ENCODE measurements at regions of chr7 and their contacts with region 1.

Region 1: GRCh38 chr7:32846701-32847100 is 44.9 kb downstream of the KBTBD2 start:
- H3K4me3 ChIP-seq: no peak overlapping the region
- H3K27ac ChIP-seq: no peak overlapping the region
- H3K4me1 ChIP-seq: no peaks in the 10 kb centered on the region
- CTCF ChIP-seq: no peak

Region 2: GRCh38 chr7:32858648-32859047 is 11.9 kb after region 1 on chr7:
- CTCF ChIA-PET with region 1: interaction called, 19 read pairs
- POLR2A ChIA-PET with region 1: no interaction called
- H3K4me3 ChIP-seq: no peak overlapping the region
- H3K27ac ChIP-seq: no peak overlapping the region
- H3K4me1 ChIP-seq: no peaks in the 10 kb centered on the region
- CTCF ChIP-seq: no peak

Region 3: GRCh38 chr7:32871624-32872371 is 25.1 kb after region 1 on chr7:
- CTCF ChIA-PET with region 1: interaction called, 26 read pairs
- POLR2A ChIA-PET with region 1: no interaction called
- H3K4me3 ChIP-seq: no peak overlapping the region
- H3K27ac ChIP-seq: no peak overlapping the region
- H3K4me1 ChIP-seq: no peaks in the 10 kb centered on the region
- CTCF ChIP-seq: no peak

Region 4: DNA sequence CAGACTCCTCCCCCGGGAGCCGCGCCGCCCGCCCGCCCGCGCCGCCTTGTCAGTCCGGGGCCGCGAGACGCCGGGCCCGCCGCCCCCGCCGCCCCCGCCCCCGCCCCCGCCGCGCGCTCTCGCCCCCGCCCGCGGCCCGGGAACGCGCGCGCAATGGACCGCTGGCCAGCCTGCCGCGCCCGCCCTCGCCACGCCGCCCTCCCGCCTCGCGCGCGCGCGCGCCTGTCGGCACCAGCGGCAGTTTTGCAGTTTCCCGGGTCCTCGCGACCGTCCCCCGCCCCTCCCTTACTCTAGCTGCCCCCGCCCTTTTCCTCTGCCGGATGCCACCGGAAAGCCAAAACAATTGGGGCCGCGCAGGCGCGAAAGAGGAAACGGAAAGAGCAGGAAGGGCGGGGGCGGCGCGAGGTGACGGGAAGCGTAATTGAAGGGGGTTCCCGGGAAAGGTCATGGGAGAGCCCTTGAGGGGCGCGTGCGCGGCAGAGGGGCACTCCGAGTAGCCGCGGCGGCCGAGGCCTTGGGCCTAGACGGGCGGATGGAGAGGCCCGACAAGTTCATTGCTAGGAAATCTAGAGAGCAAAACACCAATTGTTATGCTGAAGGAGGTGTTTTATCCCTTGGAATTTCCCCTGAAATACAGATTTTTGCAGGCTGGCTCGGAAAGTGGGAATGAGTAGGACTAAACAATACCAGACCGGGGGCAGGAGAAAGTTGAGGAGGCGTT is 45.3 kb after region 1 on chr7:
- CTCF ChIA-PET with region 1: interaction called, 12 read pairs
- POLR2A ChIA-PET with region 1: no interaction called
- H3K4me3 ChIP-seq: peak overlapping the region; percentile 87
- H3K27ac ChIP-seq: peak overlapping the region; percentile 99
- H3K4me1 ChIP-seq: peaks cover 16% of the 10 kb centered on the region
- CTCF ChIP-seq: no peak

Region 5: DNA sequence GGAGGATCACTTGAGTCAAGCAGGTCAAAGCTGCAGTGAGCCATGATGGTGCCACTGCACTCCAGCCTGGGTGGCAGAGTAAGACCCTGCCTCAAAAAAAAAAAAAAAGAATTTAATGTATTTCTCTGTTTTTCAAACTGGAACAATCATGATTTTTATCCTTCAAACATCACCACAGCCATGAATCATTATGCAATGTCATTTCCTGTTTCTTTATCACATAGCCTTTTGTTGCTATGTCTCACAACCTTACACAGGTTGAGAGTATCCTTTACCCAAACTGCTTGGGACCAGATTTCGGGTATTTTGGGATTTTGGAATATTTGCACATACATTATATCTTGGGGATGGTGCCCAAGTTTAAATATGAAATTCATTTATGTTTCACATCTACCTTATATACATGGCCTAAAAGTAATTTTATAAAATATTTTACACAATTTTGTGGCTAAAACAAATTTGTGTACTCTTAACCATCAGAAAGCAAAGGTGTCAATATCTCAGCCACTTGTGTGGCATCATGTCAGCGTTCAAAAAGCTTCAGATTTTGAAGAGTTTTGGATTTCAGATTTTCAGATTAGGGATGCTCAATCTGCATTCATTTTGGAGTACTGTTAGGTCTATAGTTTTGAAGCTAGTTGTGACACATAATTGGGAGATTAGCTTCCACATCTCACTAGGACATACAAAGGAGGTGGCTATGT is 207.7 kb after region 1 on chr7:
- CTCF ChIA-PET with region 1: interaction called, 11 read pairs
- POLR2A ChIA-PET with region 1: no interaction called
- H3K4me3 ChIP-seq: no peak overlapping the region
- H3K27ac ChIP-seq: no peak overlapping the region
- H3K4me1 ChIP-seq: peaks cover 9% of the 10 kb centered on the region
- CTCF ChIP-seq: no peak